ENCODE measurements at regions of chr14 and their contacts with region 1.

Region 1: DNA sequence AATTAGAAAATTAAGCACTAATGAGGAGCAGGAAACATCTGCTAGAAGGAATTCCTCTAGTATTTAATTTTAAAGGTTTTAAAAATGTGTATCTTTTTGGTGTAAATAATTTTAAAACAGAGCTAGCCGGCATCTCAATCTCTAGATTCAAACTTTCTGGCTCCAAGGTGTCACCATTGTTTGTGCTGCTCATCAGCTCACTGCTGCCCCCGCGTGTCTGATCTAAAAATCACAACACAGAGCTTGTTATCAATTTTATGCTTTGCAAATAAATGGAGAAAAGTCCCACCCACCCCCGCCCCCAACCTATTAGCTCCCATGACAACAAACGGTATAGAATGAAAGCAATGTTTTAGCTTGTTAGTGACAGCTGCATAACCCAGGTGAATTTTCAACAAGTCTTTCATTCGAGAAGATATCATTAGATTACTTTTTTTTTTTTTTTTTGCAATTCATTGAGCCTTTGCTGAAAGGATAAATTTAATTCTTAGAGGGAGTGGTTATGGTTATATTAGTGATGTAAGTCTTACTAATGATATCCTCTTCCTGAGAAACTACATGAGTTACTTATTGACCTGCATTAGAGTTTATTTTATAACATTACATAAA is 11.3 kb upstream of the ABHD12B start:
- DNase-seq: peak; percentile 50
- ATAC-seq: peak; percentile 83
- H3K4me3 ChIP-seq: peak overlapping the region; percentile 77
- H3K27ac ChIP-seq: peak overlapping the region; percentile 60
- H3K4me1 ChIP-seq: peaks cover 9% of the 10 kb centered on the region
- H3K27me3 ChIP-seq: no peaks in the 10 kb centered on the region; a peak in 1 of 4 replicates
- CTCF ChIP-seq: peak; percentile 61 to 79 (median 71)
- EP300 ChIP-seq: no peak
- POLR2A ChIP-seq: no peak
- RAD21 ChIP-seq: peak; percentile 94

Region 2: DNA sequence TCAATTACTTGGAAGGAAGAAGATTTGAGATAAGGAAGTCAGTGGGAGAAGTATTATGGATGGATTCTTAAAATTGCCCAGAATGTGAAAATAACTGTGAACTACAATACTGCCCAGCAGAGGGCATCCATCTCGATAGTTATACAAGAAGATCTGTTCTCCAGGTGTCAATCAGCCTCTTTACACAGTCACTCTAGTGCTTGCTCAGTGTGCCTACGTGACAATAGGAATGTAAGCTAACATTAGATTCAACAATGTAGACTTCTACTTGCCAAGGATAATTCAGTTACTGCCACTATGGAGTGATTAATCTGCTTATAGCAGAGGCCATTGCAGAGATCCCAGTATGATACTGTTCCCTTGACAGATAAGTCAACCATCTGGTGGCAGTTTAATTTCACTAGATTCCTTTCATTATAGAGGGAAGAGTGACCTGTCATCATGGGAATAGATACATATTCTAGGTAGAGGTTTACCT is 317.6 kb before region 1 on chr14:
- CTCF ChIA-PET with region 1: interaction called, 17 read pairs
- POLR2A ChIA-PET with region 1: no interaction called
- RAD21 ChIA-PET with region 1: interaction called, 4 read pairs
- SMC1A ChIA-PET with region 1: interaction called, 7 read pairs
- in situ Hi-C with region 1: no loop called
- intact Hi-C with region 1: loop called (anchors 5 kb)
- DNase-seq: no peak
- ATAC-seq: peak; percentile 94
- H3K4me3 ChIP-seq: no peak overlapping the region
- H3K27ac ChIP-seq: no peak overlapping the region
- H3K4me1 ChIP-seq: peaks cover 3% of the 10 kb centered on the region; the same call in 1 of the 2 replicates
- H3K27me3 ChIP-seq: no peaks in the 10 kb centered on the region
- CTCF ChIP-seq: peak; percentile 47 to 59 (median 52)
- EP300 ChIP-seq: no peak
- POLR2A ChIP-seq: no peak
- RAD21 ChIP-seq: peak; percentile 52

Region 3: GRCh38 chr14:50647282-50647681 is 213.3 kb before region 1 on chr14:
- CTCF ChIA-PET with region 1: interaction called, 10 read pairs
- POLR2A ChIA-PET with region 1: no interaction called
- RAD21 ChIA-PET with region 1: interaction called, 5 read pairs
- SMC1A ChIA-PET with region 1: no interaction called
- in situ Hi-C with region 1: no loop called
- intact Hi-C with region 1: no loop called
- DNase-seq: peak; percentile 45
- ATAC-seq: peak; percentile 94
- H3K4me3 ChIP-seq: peak overlapping the region; percentile 10
- H3K27ac ChIP-seq: peak overlapping the region; percentile 45
- H3K4me1 ChIP-seq: peaks cover 38% of the 10 kb centered on the region
- H3K27me3 ChIP-seq: no peaks in the 10 kb centered on the region
- CTCF ChIP-seq: no peak
- EP300 ChIP-seq: no peak
- POLR2A ChIP-seq: 0 out of 2 replicates have a peak, but pooled peaks have one; percentile 29
- RAD21 ChIP-seq: no peak

Region 4: DNA sequence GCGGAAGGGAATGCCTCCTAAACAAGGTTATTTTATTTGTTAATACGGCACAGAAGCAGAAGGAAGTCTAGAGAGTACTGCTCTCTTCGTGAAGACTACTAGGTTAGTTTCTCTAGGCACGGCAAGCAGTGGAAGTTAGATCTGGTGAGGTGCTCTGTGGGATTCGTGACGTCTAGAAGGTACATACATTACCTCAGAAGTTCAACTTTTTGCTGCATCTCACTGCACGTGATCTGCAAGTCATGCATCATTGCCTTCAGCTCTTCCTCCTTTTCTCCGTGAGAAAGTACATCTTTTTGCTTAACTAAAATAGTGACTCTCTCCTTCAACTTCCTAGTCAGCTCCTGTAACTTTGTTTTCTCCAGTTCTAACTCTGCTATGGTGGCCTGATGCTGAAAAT is 104.3 kb before region 1 on chr14:
- CTCF ChIA-PET with region 1: interaction called, 9 read pairs
- POLR2A ChIA-PET with region 1: no interaction called
- RAD21 ChIA-PET with region 1: interaction called, 11 read pairs
- SMC1A ChIA-PET with region 1: interaction called, 19 read pairs
- in situ Hi-C with region 1: no loop called
- intact Hi-C with region 1: no loop called
- DNase-seq: no peak
- ATAC-seq: peak; percentile 75
- H3K4me3 ChIP-seq: no peak overlapping the region
- H3K27ac ChIP-seq: peak overlapping the region; percentile 51
- H3K4me1 ChIP-seq: peaks cover 11% of the 10 kb centered on the region
- H3K27me3 ChIP-seq: no peaks in the 10 kb centered on the region
- CTCF ChIP-seq: no peak
- EP300 ChIP-seq: no peak
- POLR2A ChIP-seq: no peak
- RAD21 ChIP-seq: no peak

Region 5: GRCh38 chr14:50785457-50786063 is 75.0 kb before region 1 on chr14:
- CTCF ChIA-PET with region 1: interaction called, 237 read pairs
- POLR2A ChIA-PET with region 1: interaction called, 4 read pairs
- RAD21 ChIA-PET with region 1: interaction called, 113 read pairs
- SMC1A ChIA-PET with region 1: interaction called, 233 read pairs
- in situ Hi-C with region 1: loop called (anchors 5 kb)
- intact Hi-C with region 1: loop called (anchors 2 kb)
- DNase-seq: no peak
- ATAC-seq: no peak
- H3K4me3 ChIP-seq: no peak overlapping the region
- H3K27ac ChIP-seq: peak overlapping the region; percentile 5
- H3K4me1 ChIP-seq: peaks cover 59% of the 10 kb centered on the region
- H3K27me3 ChIP-seq: no peaks in the 10 kb centered on the region
- CTCF ChIP-seq: no peak
- EP300 ChIP-seq: no peak
- POLR2A ChIP-seq: no peak
- RAD21 ChIP-seq: no peak

Region 6: DNA sequence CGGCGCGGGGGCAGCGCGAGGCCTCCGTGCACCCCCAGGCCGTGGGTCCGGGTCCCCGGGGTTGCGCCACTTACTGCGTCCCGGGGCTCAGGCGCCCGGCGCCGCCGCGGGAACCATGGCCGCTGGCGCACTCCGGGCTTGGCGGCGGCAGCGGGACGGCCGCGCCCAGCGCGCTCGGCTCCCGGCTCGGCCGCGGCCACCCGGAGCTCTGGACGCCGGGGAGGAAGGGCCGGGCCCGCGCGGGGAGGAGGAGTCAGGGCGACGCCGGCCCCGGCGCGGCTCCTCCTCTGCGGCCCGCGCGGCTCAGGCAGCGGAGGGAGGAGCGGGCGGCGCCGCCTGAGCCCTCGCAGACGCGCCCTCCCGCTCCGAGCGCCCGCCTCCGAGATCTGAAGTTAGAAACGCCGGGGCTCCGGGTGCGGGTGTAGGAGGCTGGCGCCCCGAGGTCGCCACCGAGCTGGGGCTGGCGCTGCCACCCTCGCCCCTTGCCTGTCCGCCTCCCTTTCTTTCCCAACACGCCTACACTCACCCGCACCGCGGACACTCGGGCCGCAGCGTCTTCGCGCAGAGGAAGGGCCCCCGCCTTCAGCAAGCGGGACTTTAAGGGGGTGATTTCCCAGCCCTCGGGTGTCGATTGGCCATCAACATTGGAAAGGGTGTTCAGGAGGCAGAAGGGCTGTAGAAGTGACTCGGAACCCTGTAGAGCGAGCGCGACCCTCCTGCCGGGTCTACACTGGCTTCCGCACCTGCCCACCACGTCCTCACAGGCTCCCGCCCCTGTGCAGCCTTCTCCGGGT is 29.5 kb before region 1 on chr14 and contains the start of gene NIN:
- CTCF ChIA-PET with region 1: interaction called, 98 read pairs
- POLR2A ChIA-PET with region 1: interaction called, 36 read pairs
- RAD21 ChIA-PET with region 1: interaction called, 106 read pairs
- SMC1A ChIA-PET with region 1: interaction called, 180 read pairs
- in situ Hi-C with region 1: no loop called
- intact Hi-C with region 1: loop called (anchors 1 kb)
- DNase-seq: no peak
- ATAC-seq: peak; percentile 89
- H3K4me3 ChIP-seq: peak within 1 kb of the TSS; percentile 96
- H3K27ac ChIP-seq: peak within 1 kb of the TSS; percentile 87
- H3K4me1 ChIP-seq: peaks cover 26% of the 10 kb centered on the region
- H3K27me3 ChIP-seq: no peaks in the 10 kb centered on the region
- CTCF ChIP-seq: no peak
- EP300 ChIP-seq: no peak
- POLR2A ChIP-seq: peak; percentile 72
- RAD21 ChIP-seq: no peak
- polyA plus RNA-seq, gene NIN: 16.2 to 17.0 TPM

Region 7: GRCh38 chr14:50943943-50944646 is 83.5 kb after region 1 on chr14 and contains the start of gene PYGL:
- CTCF ChIA-PET with region 1: no interaction called
- POLR2A ChIA-PET with region 1: no interaction called
- RAD21 ChIA-PET with region 1: no interaction called
- SMC1A ChIA-PET with region 1: no interaction called
- in situ Hi-C with region 1: no loop called
- intact Hi-C with region 1: no loop called
- DNase-seq: no peak
- ATAC-seq: peak; percentile 91
- H3K4me3 ChIP-seq: peak within 1 kb of the TSS; percentile 65
- H3K27ac ChIP-seq: no peak within 1 kb of the TSS
- H3K4me1 ChIP-seq: peaks cover 8% of the 10 kb centered on the region
- H3K27me3 ChIP-seq: peaks cover 6 to 14% of the 10 kb centered on the region in 2 experiments
- CTCF ChIP-seq: no peak
- EP300 ChIP-seq: no peak
- POLR2A ChIP-seq: no peak
- RAD21 ChIP-seq: no peak
- polyA plus RNA-seq, gene PYGL: 0.43 to 0.88 TPM